Sigmoid colon (tissue), 7 donors: ENCODE measurements at regions of chr4 and their contacts with region 1.

Region 1: GRCh38 chr4:145936142-145936996 is 2.3 kb downstream of the ZNF827 start:
- DNase-seq: peak; percentile 85
- H3K4me3 ChIP-seq: peak overlapping the region; percentile 80 to 91 (median 84)
- H3K27ac ChIP-seq: peak overlapping the region; percentile 92 to 98 (median 94)
- H3K4me1 ChIP-seq: peaks cover 0 to 36% (median 19%) of the 10 kb centered on the region in 4 donors
- H3K27me3 ChIP-seq: no peaks in the 10 kb centered on the region
- CTCF ChIP-seq: peak in 3 of 4 experiments; percentile 18 to 28 (median 25)
- EP300 ChIP-seq: no peak
- POLR2A ChIP-seq: no peak

Region 2: DNA sequence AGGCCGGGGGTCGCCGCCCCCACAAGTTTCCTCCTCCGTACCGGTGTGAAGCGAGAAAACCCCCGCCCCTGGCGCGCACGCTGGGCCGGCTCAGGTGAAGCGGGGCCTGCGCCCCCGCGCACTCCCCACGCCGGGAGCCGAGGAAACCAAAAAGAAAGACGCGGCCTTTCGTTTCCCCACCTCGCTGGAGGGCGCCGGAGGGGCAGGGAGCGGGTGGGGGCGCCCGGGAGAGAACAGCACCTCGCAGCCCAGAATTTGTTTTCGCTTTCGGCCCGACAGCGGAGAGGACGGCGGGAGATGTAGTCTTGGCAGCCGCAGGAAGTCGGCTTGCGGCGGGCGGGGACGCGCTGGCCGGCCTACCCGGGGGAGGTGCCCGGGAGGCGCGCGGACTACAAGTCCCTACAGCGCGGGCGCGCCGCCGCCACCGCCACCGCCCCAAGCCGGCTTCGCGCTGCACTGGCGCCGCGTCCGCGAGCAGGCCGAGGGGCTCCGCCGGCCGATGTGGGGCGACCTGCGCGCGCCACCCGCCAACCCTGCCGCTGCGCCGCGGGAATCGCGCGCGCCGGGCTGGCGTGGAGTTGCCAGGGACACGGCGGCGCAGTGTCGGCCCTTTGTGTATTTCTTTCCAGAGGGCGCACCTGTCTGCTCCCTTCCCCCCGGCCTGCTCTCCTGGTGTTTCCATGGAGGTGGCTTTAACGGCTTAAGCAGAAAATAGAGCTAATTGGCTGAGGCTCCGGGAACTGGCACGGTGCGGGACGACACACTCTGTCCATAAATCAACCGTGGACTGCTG is 755.9 kb before region 1 on chr4 and contains the start of gene OTUD4:
- intact Hi-C with region 1: loop called (anchors 5 kb)
- DNase-seq: peak; percentile 98
- H3K4me3 ChIP-seq: peak within 1 kb of the TSS; percentile 85 to 98 (median 91)
- H3K27ac ChIP-seq: peak within 1 kb of the TSS; percentile 97 to 99 (median 98)
- H3K4me1 ChIP-seq: peaks cover 0 to 40% (median 32%) of the 10 kb centered on the region in 4 donors
- H3K27me3 ChIP-seq: no peaks in the 10 kb centered on the region
- CTCF ChIP-seq: no peak
- EP300 ChIP-seq: no peak
- POLR2A ChIP-seq: peak; percentile 61 to 67
- total RNA-seq, gene OTUD4: 27.7 to 31.7 (median 29.8) TPM

Region 3: GRCh38 chr4:145481164-145481941 is 455.0 kb before region 1 on chr4 and contains the start of gene SMAD1:
- intact Hi-C with region 1: loop called (anchors 5 kb)
- DNase-seq: peak; percentile 90
- H3K4me3 ChIP-seq: peak within 1 kb of the TSS; percentile 82 to 97 (median 91)
- H3K27ac ChIP-seq: peak within 1 kb of the TSS; percentile 97 to 99 (median 98)
- H3K4me1 ChIP-seq: peaks cover 0 to 33% (median 20%) of the 10 kb centered on the region in 4 donors
- H3K27me3 ChIP-seq: no peaks in the 10 kb centered on the region
- CTCF ChIP-seq: no peak
- EP300 ChIP-seq: no peak
- POLR2A ChIP-seq: no peak
- total RNA-seq, gene SMAD1: 25.8 to 45.7 (median 33.4) TPM

Region 4: GRCh38 chr4:145881989-145882388 is 54.4 kb before region 1 on chr4:
- intact Hi-C with region 1: loop called (anchors 5 kb)
- DNase-seq: no peak
- H3K4me3 ChIP-seq: no peak overlapping the region
- H3K27ac ChIP-seq: peak overlapping the region in 1 of 4 donors; percentile 77
- H3K4me1 ChIP-seq: peaks cover 0 to 52% (median 37%) of the 10 kb centered on the region in 4 donors
- H3K27me3 ChIP-seq: no peaks in the 10 kb centered on the region
- CTCF ChIP-seq: no peak
- EP300 ChIP-seq: no peak
- POLR2A ChIP-seq: no peak

Region 5: GRCh38 chr4:145909773-145910172 is 26.6 kb before region 1 on chr4:
- intact Hi-C with region 1: loop called (anchors 2 kb)
- DNase-seq: no peak
- H3K4me3 ChIP-seq: peak overlapping the region; percentile 23 to 48 (median 41)
- H3K27ac ChIP-seq: peak overlapping the region; percentile 74 to 81 (median 78)
- H3K4me1 ChIP-seq: peaks cover 0 to 40% (median 28%) of the 10 kb centered on the region in 4 donors
- H3K27me3 ChIP-seq: no peaks in the 10 kb centered on the region
- CTCF ChIP-seq: no peak
- EP300 ChIP-seq: no peak
- POLR2A ChIP-seq: no peak

Region 6: GRCh38 chr4:146175541-146176453 is 239.4 kb after region 1 on chr4 and contains the start of gene LSM6:
- intact Hi-C with region 1: loop called (anchors 5 kb)
- DNase-seq: peak; percentile 91
- H3K4me3 ChIP-seq: peak within 1 kb of the TSS; percentile 87 to 92 (median 88)
- H3K27ac ChIP-seq: peak within 1 kb of the TSS; percentile 93 to 95 (median 93)
- H3K4me1 ChIP-seq: peaks cover 0 to 42% (median 33%) of the 10 kb centered on the region in 4 donors
- H3K27me3 ChIP-seq: no peaks in the 10 kb centered on the region
- CTCF ChIP-seq: no peak
- EP300 ChIP-seq: peak in 2 of 4 donors; percentile 13 to 33
- POLR2A ChIP-seq: peak in 1 of 2 donors; percentile 15
- total RNA-seq, gene LSM6: 16.9 to 51.5 (median 32.4) TPM

Region 7: GRCh38 chr4:147683717-147684700 is 1747.6 kb after region 1 on chr4 and contains the start of gene PRMT9:
- intact Hi-C with region 1: loop called (anchors 5 kb)
- DNase-seq: peak; percentile 96
- H3K4me3 ChIP-seq: peak within 1 kb of the TSS; percentile 65 to 90 (median 80)
- H3K27ac ChIP-seq: peak within 1 kb of the TSS; percentile 84 to 95 (median 92)
- H3K4me1 ChIP-seq: peaks cover 0 to 22% (median 16%) of the 10 kb centered on the region in 4 donors
- H3K27me3 ChIP-seq: no peaks in the 10 kb centered on the region
- CTCF ChIP-seq: no peak
- EP300 ChIP-seq: peak in 3 of 4 donors; percentile 94 to 95 (median 94)
- POLR2A ChIP-seq: peak; percentile 87 to 90
- total RNA-seq, gene PRMT9: 7.1 to 10.7 (median 10.0) TPM